ENCODE measurements at regions of chr3 and their contacts with region 1.

Region 1: GRCh38 chr3:31077021-31077601 is 182.7 kb upstream of the GADL1 start:
- DNase-seq: peak; percentile 68
- ATAC-seq: peak; percentile 98
- H3K4me3 Mint-ChIP-seq: no peak overlapping the region
- H3K27ac Mint-ChIP-seq: peak overlapping the region; percentile 52
- H3K4me1 Mint-ChIP-seq: peaks cover 26% of the 10 kb centered on the region
- H3K27me3 Mint-ChIP-seq: peaks cover 5% of the 10 kb centered on the region

Region 2: GRCh38 chr3:29186982-29187725 is 1890.0 kb before region 1 on chr3:
- CTCF ChIA-PET with region 1: no interaction called
- POLR2A ChIA-PET with region 1: no interaction called
- intact Hi-C with region 1: loop called in 1 of 2 experiments (anchors 5 kb)
- DNase-seq: no peak
- ATAC-seq: peak; percentile 43
- H3K4me3 Mint-ChIP-seq: no peak overlapping the region
- H3K27ac Mint-ChIP-seq: peak overlapping the region; percentile 64
- H3K4me1 Mint-ChIP-seq: peaks cover 22% of the 10 kb centered on the region
- H3K27me3 Mint-ChIP-seq: no peaks in the 10 kb centered on the region

Region 3: DNA sequence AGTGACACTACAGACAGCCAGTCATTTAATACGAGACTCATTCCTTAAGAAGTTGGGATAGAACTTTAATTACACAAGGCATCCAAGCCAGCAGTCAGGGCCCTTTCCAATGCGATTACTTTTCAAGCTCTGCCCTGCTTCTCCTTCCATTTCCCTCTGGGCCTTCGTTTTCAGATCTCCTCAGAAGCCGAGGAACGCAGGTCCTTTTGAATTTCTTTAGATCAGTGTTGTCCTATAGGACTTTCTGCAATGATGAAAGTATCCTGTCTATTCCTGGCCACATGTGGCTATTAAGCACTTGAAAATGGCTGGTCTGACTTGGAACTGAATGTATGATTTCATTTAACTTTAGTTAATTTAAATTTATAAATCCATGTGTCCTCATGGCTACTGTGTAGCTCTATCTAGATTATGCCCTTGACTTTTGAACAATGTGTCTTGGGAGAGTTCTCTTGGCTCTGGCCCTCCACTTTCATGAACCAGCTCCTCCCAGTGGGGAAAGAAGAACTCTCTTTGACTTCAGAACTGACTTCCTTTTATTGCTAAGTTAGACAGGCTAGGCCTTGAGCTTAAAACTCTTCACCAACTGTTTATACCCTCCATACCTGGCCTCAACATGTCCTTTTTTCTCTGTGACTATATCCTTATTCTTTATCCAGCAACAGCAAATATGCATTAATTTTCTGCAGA is 448.1 kb before region 1 on chr3:
- CTCF ChIA-PET with region 1: no interaction called
- POLR2A ChIA-PET with region 1: no interaction called
- intact Hi-C with region 1: loop called in 1 of 2 experiments (anchors 10 kb)
- DNase-seq: no peak
- ATAC-seq: no peak
- H3K4me3 Mint-ChIP-seq: peak overlapping the region; percentile 61
- H3K27ac Mint-ChIP-seq: peak overlapping the region; percentile 97
- H3K4me1 Mint-ChIP-seq: peaks cover 96% of the 10 kb centered on the region
- H3K27me3 Mint-ChIP-seq: no peaks in the 10 kb centered on the region

Region 4: GRCh38 chr3:30948426-30948825 is 128.7 kb before region 1 on chr3:
- CTCF ChIA-PET with region 1: no interaction called
- POLR2A ChIA-PET with region 1: no interaction called
- intact Hi-C with region 1: no loop called
- DNase-seq: no peak
- ATAC-seq: no peak
- H3K4me3 Mint-ChIP-seq: no peak overlapping the region
- H3K27ac Mint-ChIP-seq: no peak overlapping the region
- H3K4me1 Mint-ChIP-seq: peaks cover 2% of the 10 kb centered on the region
- H3K27me3 Mint-ChIP-seq: peaks cover 3% of the 10 kb centered on the region

Region 5: GRCh38 chr3:31213869-31214486 is 136.9 kb after region 1 on chr3:
- CTCF ChIA-PET with region 1: no interaction called
- POLR2A ChIA-PET with region 1: no interaction called
- intact Hi-C with region 1: loop called in 1 of 2 experiments (anchors 2 kb)
- DNase-seq: peak; percentile 48
- ATAC-seq: peak; percentile 4
- H3K4me3 Mint-ChIP-seq: no peak overlapping the region
- H3K27ac Mint-ChIP-seq: peak overlapping the region; percentile 82
- H3K4me1 Mint-ChIP-seq: peaks cover 90% of the 10 kb centered on the region
- H3K27me3 Mint-ChIP-seq: no peaks in the 10 kb centered on the region

Region 6: GRCh38 chr3:31754575-31755278 is 677.6 kb after region 1 on chr3:
- CTCF ChIA-PET with region 1: no interaction called
- POLR2A ChIA-PET with region 1: no interaction called
- intact Hi-C with region 1: loop called in 1 of 2 experiments (anchors 10 kb)
- DNase-seq: no peak
- ATAC-seq: peak; percentile 57
- H3K4me3 Mint-ChIP-seq: no peak overlapping the region
- H3K27ac Mint-ChIP-seq: peak overlapping the region; percentile 95
- H3K4me1 Mint-ChIP-seq: peaks cover 48% of the 10 kb centered on the region
- H3K27me3 Mint-ChIP-seq: peaks cover 2% of the 10 kb centered on the region

Measured in activated CD4-positive, alpha-beta T cell treated with anti-CD3 and anti-CD28 coated beads for 36 hours (primary cell).